Endothelial cell of umbilical vein (primary cell): ENCODE measurements at regions of chr1 and their contacts with region 1.

Region 1: GRCh38 chr1:58783993-58784757 is at the start of gene JUN:
- DNase-seq: peak; percentile 100
- H3K4me3 ChIP-seq: peak within 1 kb of the TSS; percentile 60 to 91 (median 80)
- H3K27ac ChIP-seq: peak within 1 kb of the TSS; percentile 97
- H3K4me1 ChIP-seq: peaks cover 30% of the 10 kb centered on the region
- H3K27me3 ChIP-seq: no peaks in the 10 kb centered on the region
- CTCF ChIP-seq: no peak
- POLR2A ChIP-seq: peak; percentile 100
- total RNA-seq, gene JUN: 81.1 and 88.3 TPM in 2 replicates

Region 2: DNA sequence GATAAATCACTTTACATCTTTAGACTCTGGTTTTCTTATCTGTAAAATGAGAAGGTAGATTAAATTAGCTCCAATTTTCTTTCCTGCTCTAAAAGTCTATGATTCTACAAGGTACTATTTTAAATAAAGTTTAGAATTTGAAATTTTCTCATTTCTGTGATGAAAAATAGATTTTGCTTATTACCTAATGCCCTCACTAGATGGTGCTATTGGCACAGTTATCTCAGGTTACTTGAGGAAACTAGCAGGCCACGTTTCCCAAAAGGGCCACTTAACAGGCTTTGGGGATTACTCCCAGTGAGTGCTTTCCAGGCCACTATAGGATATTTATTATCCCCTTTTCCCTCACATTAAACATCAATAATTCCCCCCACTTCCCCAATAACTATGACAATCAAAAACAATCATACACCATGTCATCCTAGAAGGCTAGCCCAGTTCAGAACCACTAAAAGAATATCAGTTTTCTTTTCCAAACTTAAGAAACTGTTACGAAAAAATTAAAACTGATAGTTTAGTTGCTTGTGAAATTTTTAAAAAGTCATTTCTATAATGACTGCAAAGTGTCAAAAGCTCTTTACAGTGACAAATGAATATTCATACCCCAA is 268.3 kb before region 1 on chr1:
- CTCF ChIA-PET with region 1: no interaction called
- POLR2A ChIA-PET with region 1: no interaction called
- dilution Hi-C with region 1: no loop called
- intact Hi-C with region 1: loop called (anchors 5 kb)
- DNase-seq: peak; percentile 71
- H3K4me3 ChIP-seq: no peak overlapping the region
- H3K27ac ChIP-seq: no peak overlapping the region
- H3K4me1 ChIP-seq: no peaks in the 10 kb centered on the region
- H3K27me3 ChIP-seq: no peaks in the 10 kb centered on the region
- CTCF ChIP-seq: peak; percentile 37 to 58
- POLR2A ChIP-seq: no peak

Region 3: GRCh38 chr1:58816072-58816746 is 32.0 kb after region 1 on chr1:
- CTCF ChIA-PET with region 1: interaction called, 11 read pairs
- POLR2A ChIA-PET with region 1: interaction called, 20 read pairs
- dilution Hi-C with region 1: no loop called
- intact Hi-C with region 1: loop called (anchors 1 kb)
- DNase-seq: peak; percentile 91
- H3K4me3 ChIP-seq: peak overlapping the region; percentile 34 to 68 (median 54)
- H3K27ac ChIP-seq: peak overlapping the region; percentile 100
- H3K4me1 ChIP-seq: peaks cover 72% of the 10 kb centered on the region
- H3K27me3 ChIP-seq: no peaks in the 10 kb centered on the region
- CTCF ChIP-seq: peak in 1 of 2 donors; percentile 14
- POLR2A ChIP-seq: peak; percentile 63

Region 4: GRCh38 chr1:58896246-58897183 is 112.3 kb after region 1 on chr1:
- CTCF ChIA-PET with region 1: interaction called, 11 read pairs
- POLR2A ChIA-PET with region 1: interaction called, 5 read pairs
- dilution Hi-C with region 1: no loop called
- intact Hi-C with region 1: loop called (anchors 1 kb)
- DNase-seq: peak; percentile 79
- H3K4me3 ChIP-seq: no peak overlapping the region
- H3K27ac ChIP-seq: peak overlapping the region; percentile 61
- H3K4me1 ChIP-seq: peaks cover 75% of the 10 kb centered on the region
- H3K27me3 ChIP-seq: no peaks in the 10 kb centered on the region
- CTCF ChIP-seq: peak in 1 of 2 donors; percentile 17
- POLR2A ChIP-seq: no peak

Region 5: GRCh38 chr1:59076612-59077011 is 292.4 kb after region 1 on chr1:
- CTCF ChIA-PET with region 1: interaction called, 12 read pairs
- POLR2A ChIA-PET with region 1: interaction called, 3 read pairs
- dilution Hi-C with region 1: no loop called
- intact Hi-C with region 1: loop called (anchors 1 kb)
- DNase-seq: peak; percentile 60
- H3K4me3 ChIP-seq: no peak overlapping the region
- H3K27ac ChIP-seq: no peak overlapping the region
- H3K4me1 ChIP-seq: peaks cover 13% of the 10 kb centered on the region
- H3K27me3 ChIP-seq: no peaks in the 10 kb centered on the region
- CTCF ChIP-seq: peak in 1 of 2 donors; percentile 16
- POLR2A ChIP-seq: no peak

Region 6: DNA sequence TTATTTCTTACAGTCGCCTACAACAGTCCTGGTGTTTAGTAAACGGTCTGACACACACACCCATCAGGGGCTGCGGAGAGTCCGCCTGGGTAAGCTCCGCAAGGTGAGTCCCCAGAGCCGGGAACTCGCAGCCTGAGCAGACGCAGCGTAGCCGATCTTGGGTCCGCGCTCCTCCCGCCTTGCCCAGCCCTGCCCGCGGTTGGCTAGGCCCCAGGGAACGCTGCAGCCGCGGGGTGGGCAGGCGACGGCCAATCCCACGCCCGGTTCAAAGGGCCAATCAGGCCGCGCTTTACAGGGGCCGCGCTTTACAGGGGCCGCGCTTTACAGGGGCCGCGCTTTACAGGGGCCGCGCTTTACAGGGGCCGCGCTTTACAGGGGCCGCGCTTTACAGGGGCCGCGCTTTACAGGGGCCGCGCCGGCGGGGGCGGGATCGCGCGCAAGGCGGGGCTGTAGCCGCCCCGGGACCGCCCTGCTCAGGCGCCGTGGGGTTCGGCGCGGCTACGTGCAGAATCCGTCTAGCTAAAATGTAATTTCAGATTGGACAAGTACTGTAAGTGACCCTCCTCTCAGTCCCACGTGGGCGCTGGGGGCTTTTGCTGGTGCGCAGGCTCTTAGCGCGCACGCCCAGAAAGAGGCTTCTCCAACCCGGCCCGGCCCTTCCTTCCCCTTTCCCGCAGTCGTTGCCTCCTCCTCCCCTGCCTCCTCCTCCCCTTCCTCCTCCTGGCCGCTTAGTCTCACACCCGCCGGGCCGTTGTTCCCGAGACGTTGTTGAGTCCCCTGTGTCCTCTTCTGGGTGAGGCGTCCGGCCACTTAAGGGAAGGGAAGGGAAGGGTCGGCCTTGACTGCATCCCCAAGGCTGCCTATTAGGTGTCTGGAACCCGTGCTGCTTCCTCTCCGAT is 512.4 kb after region 1 on chr1 and contains the start of gene FGGY:
- CTCF ChIA-PET with region 1: interaction called, 5 read pairs
- POLR2A ChIA-PET with region 1: interaction called, 9 read pairs
- dilution Hi-C with region 1: no loop called
- intact Hi-C with region 1: loop called (anchors 1 kb)
- DNase-seq: peak; percentile 99
- H3K4me3 ChIP-seq: peak within 1 kb of the TSS; percentile 36 to 81 (median 64)
- H3K27ac ChIP-seq: peak within 1 kb of the TSS; percentile 92
- H3K4me1 ChIP-seq: peaks cover 30% of the 10 kb centered on the region
- H3K27me3 ChIP-seq: no peaks in the 10 kb centered on the region
- CTCF ChIP-seq: no peak
- POLR2A ChIP-seq: peak; percentile 95
- total RNA-seq, gene FGGY: 5.6 and 8.3 TPM in 2 replicates

Region 7: GRCh38 chr1:59750328-59751003 is 966.3 kb after region 1 on chr1:
- CTCF ChIA-PET with region 1: interaction called, 4 read pairs
- POLR2A ChIA-PET with region 1: interaction called, 3 read pairs
- dilution Hi-C with region 1: no loop called
- intact Hi-C with region 1: loop called (anchors 1 kb)
- DNase-seq: peak; percentile 97
- H3K4me3 ChIP-seq: peak overlapping the region in 1 of 3 experiments; percentile 19
- H3K27ac ChIP-seq: peak overlapping the region; percentile 87
- H3K4me1 ChIP-seq: peaks cover 30% of the 10 kb centered on the region
- H3K27me3 ChIP-seq: no peaks in the 10 kb centered on the region
- CTCF ChIP-seq: no peak
- POLR2A ChIP-seq: no peak

Region 8: DNA sequence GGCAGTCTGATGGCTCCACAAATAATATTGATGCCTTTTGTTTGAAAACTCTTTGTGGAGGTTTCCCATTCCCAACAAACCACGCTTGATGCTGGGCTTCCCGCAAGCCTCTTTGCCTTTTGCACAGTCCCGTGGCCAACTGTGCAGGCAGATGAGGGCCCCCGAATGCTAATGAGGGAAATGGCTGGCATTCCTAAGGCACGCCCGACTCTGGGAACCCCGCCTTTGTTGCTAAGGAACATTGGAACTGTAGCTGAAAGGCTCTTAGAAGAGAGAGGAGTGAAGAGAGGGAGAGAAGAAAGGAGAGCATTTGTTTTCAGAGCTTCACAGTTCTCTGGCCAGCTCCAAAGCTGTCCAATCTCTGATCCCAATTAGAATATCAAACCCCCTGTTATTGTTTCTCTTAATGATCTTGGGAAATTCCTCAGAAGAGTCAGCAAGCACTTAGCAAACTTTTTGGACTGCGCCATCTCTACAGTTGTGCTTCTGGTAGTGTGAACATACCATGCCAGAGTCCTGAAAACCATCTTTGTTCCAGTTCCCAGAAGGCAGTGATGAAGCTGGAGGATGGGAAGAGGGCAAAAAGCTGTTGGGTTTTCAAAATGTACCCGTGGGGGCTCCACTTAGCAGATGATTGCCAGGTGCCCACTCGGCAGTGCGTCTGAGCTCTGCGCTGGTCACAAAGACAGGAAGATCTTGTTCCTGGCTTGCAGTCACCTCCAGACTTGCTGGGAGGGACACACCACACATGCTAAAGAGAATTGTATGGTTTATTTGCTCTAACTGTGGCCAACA is 1202.5 kb after region 1 on chr1:
- CTCF ChIA-PET with region 1: no interaction called
- POLR2A ChIA-PET with region 1: no interaction called
- dilution Hi-C with region 1: no loop called
- intact Hi-C with region 1: no loop called
- DNase-seq: no peak
- H3K4me3 ChIP-seq: no peak overlapping the region
- H3K27ac ChIP-seq: no peak overlapping the region
- H3K4me1 ChIP-seq: no peaks in the 10 kb centered on the region
- H3K27me3 ChIP-seq: peaks cover 2 to 3% of the 10 kb centered on the region in 2 experiments
- CTCF ChIP-seq: no peak
- POLR2A ChIP-seq: no peak